ENCODE measurements at regions of chr12 and their contacts with region 1.

Region 1: GRCh38 chr12:110501752-110502738 is at the starts of genes RAD9B and VPS29:
- DNase-seq: peak; percentile 96 to 99 (median 98)
- H3K4me3 ChIP-seq: peak within 1 kb of the TSS; percentile 68 to 92 (median 91)
- H3K4me3 Mint-ChIP-seq: peak within 1 kb of the TSS; percentile 98
- H3K27ac ChIP-seq: peak within 1 kb of the TSS; percentile 90 to 94
- H3K27ac Mint-ChIP-seq: peak within 1 kb of the TSS; percentile 94 to 98 (median 96)
- H3K4me1 ChIP-seq: peaks cover 29 to 49% of the 10 kb centered on the region in 2 donors
- H3K4me1 Mint-ChIP-seq: peaks cover 38% of the 10 kb centered on the region
- H3K27me3 ChIP-seq: no peaks in the 10 kb centered on the region
- H3K27me3 Mint-ChIP-seq: no peaks in the 10 kb centered on the region
- CTCF ChIP-seq: no peak
- polyA plus RNA-seq, gene RAD9B: 1.1 to 3.0 (median 1.3) TPM
- polyA plus RNA-seq, gene VPS29: 224 to 409 (median 342) TPM

Region 2: DNA sequence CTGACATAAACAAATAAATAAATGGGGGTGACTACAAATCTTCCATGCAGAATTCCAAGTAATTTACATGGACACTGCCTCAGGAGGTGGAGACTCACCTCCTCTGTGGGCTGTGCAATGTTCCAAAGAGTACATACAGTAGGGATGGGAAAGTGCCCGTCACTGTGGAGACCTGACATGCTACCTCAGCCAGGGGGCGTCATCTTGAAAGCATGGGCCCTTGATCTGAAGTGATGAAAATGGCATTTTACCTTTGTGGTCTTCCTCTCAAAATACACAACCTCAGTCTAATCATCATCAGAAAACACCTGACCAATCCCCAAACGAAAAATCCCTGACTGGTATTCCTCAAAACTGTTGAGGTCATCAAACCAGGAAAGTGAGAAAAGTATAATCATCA is 147.0 kb before region 1 on chr12:
- intact Hi-C with region 1: no loop called
- DNase-seq: peak in 1 of 3 donors; percentile 24
- H3K4me3 ChIP-seq: no peak overlapping the region
- H3K4me3 Mint-ChIP-seq: no peak overlapping the region
- H3K27ac ChIP-seq: no peak overlapping the region
- H3K27ac Mint-ChIP-seq: peak overlapping the region in 1 of 7 donors; percentile 14
- H3K4me1 ChIP-seq: peaks cover 10 to 12% of the 10 kb centered on the region in 2 donors
- H3K4me1 Mint-ChIP-seq: peaks cover 20% of the 10 kb centered on the region
- H3K27me3 ChIP-seq: no peaks in the 10 kb centered on the region
- H3K27me3 Mint-ChIP-seq: peaks cover 2 to 4% (median 2%) of the 10 kb centered on the region in 3 donors
- CTCF ChIP-seq: peak; percentile 53

Region 3: GRCh38 chr12:110458756-110459155 is 43.3 kb before region 1 on chr12:
- intact Hi-C with region 1: loop called in 1 of 2 experiments (anchors 2 kb)
- DNase-seq: no peak
- H3K4me3 ChIP-seq: no peak overlapping the region
- H3K4me3 Mint-ChIP-seq: no peak overlapping the region
- H3K27ac ChIP-seq: no peak overlapping the region
- H3K27ac Mint-ChIP-seq: peak overlapping the region in 3 of 7 donors; percentile 11 to 83 (median 71)
- H3K4me1 ChIP-seq: peaks cover 39% of the 10 kb centered on the region in 2 donors
- H3K4me1 Mint-ChIP-seq: peaks cover 30% of the 10 kb centered on the region
- H3K27me3 ChIP-seq: no peaks in the 10 kb centered on the region
- H3K27me3 Mint-ChIP-seq: peaks cover 0 to 1% (median 0%) of the 10 kb centered on the region in 3 donors
- CTCF ChIP-seq: no peak

Region 4: GRCh38 chr12:110468212-110469048 is 33.6 kb before region 1 on chr12 and contains the starts of genes FAM216A and GPN3:
- intact Hi-C with region 1: loop called (anchors 1 to 5 kb)
- DNase-seq: peak; percentile 94 to 96 (median 94)
- H3K4me3 ChIP-seq: peak within 1 kb of the TSS; percentile 62 to 96 (median 76)
- H3K4me3 Mint-ChIP-seq: peak within 1 kb of the TSS; percentile 100
- H3K27ac ChIP-seq: peak within 1 kb of the TSS; percentile 60 to 79
- H3K27ac Mint-ChIP-seq: peak within 1 kb of the TSS; percentile 90 to 98 (median 95)
- H3K4me1 ChIP-seq: peaks cover 23 to 34% of the 10 kb centered on the region in 2 donors
- H3K4me1 Mint-ChIP-seq: peaks cover 25% of the 10 kb centered on the region
- H3K27me3 ChIP-seq: no peaks in the 10 kb centered on the region
- H3K27me3 Mint-ChIP-seq: no peaks in the 10 kb centered on the region
- CTCF ChIP-seq: no peak
- polyA plus RNA-seq, gene FAM216A: 5.1 to 10.9 (median 6.2) TPM
- polyA plus RNA-seq, gene GPN3: 7.3 to 52.4 (median 25.3) TPM

Region 5: GRCh38 chr12:110583137-110584059 is 81.4 kb after region 1 on chr12 and contains the start of gene PPTC7:
- intact Hi-C with region 1: no loop called
- DNase-seq: peak; percentile 95 to 96 (median 95)
- H3K4me3 ChIP-seq: peak within 1 kb of the TSS; percentile 76 to 89 (median 77)
- H3K4me3 Mint-ChIP-seq: peak within 1 kb of the TSS; percentile 97 to 98
- H3K27ac ChIP-seq: peak within 1 kb of the TSS; percentile 80 to 91
- H3K27ac Mint-ChIP-seq: peak within 1 kb of the TSS; percentile 86 to 95 (median 91)
- H3K4me1 ChIP-seq: peaks cover 56 to 66% of the 10 kb centered on the region in 2 donors
- H3K4me1 Mint-ChIP-seq: peaks cover 64% of the 10 kb centered on the region
- H3K27me3 ChIP-seq: no peaks in the 10 kb centered on the region
- H3K27me3 Mint-ChIP-seq: peaks cover 0 to 10% (median 0%) of the 10 kb centered on the region in 3 donors
- CTCF ChIP-seq: no peak
- polyA plus RNA-seq, gene PPTC7: 11.6 to 36.5 (median 15.1) TPM

Region 6: DNA sequence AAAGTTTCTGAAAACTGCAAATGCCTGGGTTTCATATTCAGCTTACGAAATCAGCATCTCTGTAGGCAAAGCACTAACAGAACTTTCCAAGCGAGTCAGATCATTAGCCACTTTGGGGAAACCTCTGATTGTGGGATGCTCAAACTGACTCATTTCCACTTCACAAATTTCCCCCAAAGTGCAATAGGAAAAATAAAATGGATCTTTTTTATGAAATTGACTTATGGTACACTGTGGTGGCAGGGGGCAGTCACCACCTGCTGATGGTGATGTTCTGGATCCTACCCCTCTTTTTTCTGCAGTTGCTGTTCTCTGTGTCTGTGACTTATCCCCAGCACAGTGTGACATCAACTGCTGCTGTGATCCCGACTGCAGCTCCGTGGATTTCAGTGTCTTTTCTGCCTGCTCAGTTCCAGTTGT is 117.5 kb after region 1 on chr12:
- intact Hi-C with region 1: loop called in 1 of 2 experiments (anchors 5 kb)
- DNase-seq: peak in 1 of 3 donors; percentile 46
- H3K4me3 ChIP-seq: no peak overlapping the region
- H3K4me3 Mint-ChIP-seq: no peak overlapping the region
- H3K27ac ChIP-seq: no peak overlapping the region
- H3K27ac Mint-ChIP-seq: no peak overlapping the region
- H3K4me1 ChIP-seq: peaks cover under 1 to 2% of the 10 kb centered on the region in 2 donors
- H3K4me1 Mint-ChIP-seq: peaks cover 2% of the 10 kb centered on the region
- H3K27me3 ChIP-seq: no peaks in the 10 kb centered on the region
- H3K27me3 Mint-ChIP-seq: peaks cover 0 to 5% (median 3%) of the 10 kb centered on the region in 3 donors
- CTCF ChIP-seq: no peak